Caco-2 (cell line): ENCODE measurements at regions of chr6 and their contacts with region 1.

Region 1: DNA sequence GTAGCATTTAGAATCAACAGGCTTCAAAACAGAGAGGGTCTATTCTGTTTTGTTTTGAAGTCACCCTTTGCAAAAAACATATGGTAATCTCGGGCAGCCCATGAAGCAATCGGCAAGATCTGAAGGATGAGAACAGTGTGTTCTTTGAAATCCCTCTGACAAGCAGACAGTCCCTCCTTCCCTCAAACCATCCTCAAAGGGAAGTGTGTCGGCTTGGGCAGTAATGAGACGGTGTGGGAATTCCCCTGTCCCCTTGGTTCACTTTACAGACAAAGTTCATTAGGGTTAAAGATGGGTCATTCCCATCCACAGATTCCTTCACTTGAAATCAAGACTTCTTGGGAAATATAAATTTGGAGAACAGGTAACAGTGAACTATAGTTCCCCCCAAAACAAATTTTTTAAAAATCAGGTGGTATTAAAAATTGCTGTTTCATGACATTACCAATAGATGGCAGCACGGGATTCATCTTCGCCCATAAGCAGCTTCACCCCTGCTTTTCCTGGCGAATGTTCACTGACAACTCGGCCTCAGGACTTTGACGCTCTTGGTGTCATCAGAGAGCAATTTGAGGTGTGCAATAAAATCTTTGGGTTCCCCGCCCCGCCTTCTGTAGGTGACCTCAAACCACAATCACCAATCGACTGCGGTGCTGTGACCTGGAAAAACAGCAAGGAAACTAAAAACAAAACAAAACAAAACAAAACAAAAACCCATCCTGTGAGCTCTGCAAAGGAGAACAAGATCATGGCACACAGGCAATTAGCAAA is 159.3 kb upstream of the TNFAIP3 start:
- DNase-seq: peak; percentile 73 to 88
- H3K4me3 ChIP-seq: no peak overlapping the region
- H3K4me3 Mint-ChIP-seq: peak overlapping the region; percentile 62
- H3K27ac Mint-ChIP-seq: peak overlapping the region; percentile 89
- H3K4me1 ChIP-seq: peaks cover 22% of the 10 kb centered on the region
- H3K4me1 Mint-ChIP-seq: peaks cover 36% of the 10 kb centered on the region
- H3K27me3 ChIP-seq: no peaks in the 10 kb centered on the region
- H3K27me3 Mint-ChIP-seq: no peaks in the 10 kb centered on the region
- CTCF ChIP-seq: peak; percentile 67 to 80

Region 2: GRCh38 chr6:137661601-137662000 is 46.2 kb before region 1 on chr6:
- CTCF ChIA-PET with region 1: no interaction called
- POLR2A ChIA-PET with region 1: no interaction called
- intact Hi-C with region 1: no loop called
- DNase-seq: peak; percentile 42 to 44
- H3K4me3 ChIP-seq: no peak overlapping the region
- H3K4me3 Mint-ChIP-seq: no peak overlapping the region
- H3K27ac Mint-ChIP-seq: no peak overlapping the region
- H3K4me1 ChIP-seq: peaks cover 52% of the 10 kb centered on the region
- H3K4me1 Mint-ChIP-seq: peaks cover 17% of the 10 kb centered on the region
- H3K27me3 ChIP-seq: no peaks in the 10 kb centered on the region
- H3K27me3 Mint-ChIP-seq: no peaks in the 10 kb centered on the region
- CTCF ChIP-seq: peak; percentile 15 to 27

Region 3: GRCh38 chr6:137722749-137723272 is 15.0 kb after region 1 on chr6:
- CTCF ChIA-PET with region 1: interaction called, 10 read pairs
- POLR2A ChIA-PET with region 1: no interaction called
- intact Hi-C with region 1: no loop called
- DNase-seq: no peak
- H3K4me3 ChIP-seq: no peak overlapping the region
- H3K4me3 Mint-ChIP-seq: peak overlapping the region; percentile 36
- H3K27ac Mint-ChIP-seq: peak overlapping the region; percentile 86
- H3K4me1 ChIP-seq: peaks cover 41% of the 10 kb centered on the region
- H3K4me1 Mint-ChIP-seq: peaks cover 32% of the 10 kb centered on the region
- H3K27me3 ChIP-seq: no peaks in the 10 kb centered on the region
- H3K27me3 Mint-ChIP-seq: no peaks in the 10 kb centered on the region
- CTCF ChIP-seq: no peak

Region 4: DNA sequence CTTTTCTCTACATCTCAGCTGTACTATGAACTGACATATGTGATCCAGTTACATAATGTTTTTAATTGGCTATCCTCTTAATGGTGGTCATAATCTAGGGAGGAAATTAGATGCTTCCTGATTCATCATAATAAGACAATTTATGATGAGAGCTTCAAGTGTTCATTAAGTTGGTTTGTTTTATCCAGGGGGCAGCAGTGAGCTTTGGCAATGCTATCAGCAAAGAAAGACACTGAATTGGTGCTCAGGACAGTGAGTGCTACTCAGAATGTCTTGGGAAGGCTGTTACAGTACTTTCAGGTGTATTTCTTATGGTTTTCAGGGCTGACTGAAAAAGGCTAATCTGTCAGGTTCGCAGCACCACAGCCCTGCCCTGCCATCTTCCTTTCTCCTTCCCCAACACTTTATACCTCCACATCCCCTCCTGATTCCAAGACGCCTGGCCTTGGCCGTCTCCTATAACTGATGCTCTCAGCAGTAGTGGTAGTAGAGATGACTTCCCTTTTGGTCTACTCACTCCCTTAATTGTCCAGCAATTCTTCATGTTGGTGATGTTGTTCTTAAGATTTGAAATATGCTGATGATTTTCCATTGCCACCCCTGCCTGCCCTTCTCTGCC is 92.3 kb after region 1 on chr6:
- CTCF ChIA-PET with region 1: interaction called, 7 read pairs
- POLR2A ChIA-PET with region 1: no interaction called
- intact Hi-C with region 1: loop called (anchors 1 kb)
- DNase-seq: peak; percentile 47 to 52
- H3K4me3 ChIP-seq: no peak overlapping the region
- H3K4me3 Mint-ChIP-seq: no peak overlapping the region
- H3K27ac Mint-ChIP-seq: peak overlapping the region; percentile 72
- H3K4me1 ChIP-seq: peaks cover 98% of the 10 kb centered on the region
- H3K4me1 Mint-ChIP-seq: peaks cover 43% of the 10 kb centered on the region
- H3K27me3 ChIP-seq: no peaks in the 10 kb centered on the region
- H3K27me3 Mint-ChIP-seq: no peaks in the 10 kb centered on the region
- CTCF ChIP-seq: peak; percentile 27 to 33

Region 5: GRCh38 chr6:137811121-137811915 is 103.5 kb after region 1 on chr6:
- CTCF ChIA-PET with region 1: no interaction called
- POLR2A ChIA-PET with region 1: no interaction called
- intact Hi-C with region 1: no loop called
- DNase-seq: peak; percentile 63 to 76
- H3K4me3 ChIP-seq: no peak overlapping the region
- H3K4me3 Mint-ChIP-seq: peak overlapping the region; percentile 67
- H3K27ac Mint-ChIP-seq: peak overlapping the region; percentile 74
- H3K4me1 ChIP-seq: peaks cover 41% of the 10 kb centered on the region
- H3K4me1 Mint-ChIP-seq: peaks cover 33% of the 10 kb centered on the region
- H3K27me3 ChIP-seq: no peaks in the 10 kb centered on the region
- H3K27me3 Mint-ChIP-seq: no peaks in the 10 kb centered on the region
- CTCF ChIP-seq: no peak

Region 6: DNA sequence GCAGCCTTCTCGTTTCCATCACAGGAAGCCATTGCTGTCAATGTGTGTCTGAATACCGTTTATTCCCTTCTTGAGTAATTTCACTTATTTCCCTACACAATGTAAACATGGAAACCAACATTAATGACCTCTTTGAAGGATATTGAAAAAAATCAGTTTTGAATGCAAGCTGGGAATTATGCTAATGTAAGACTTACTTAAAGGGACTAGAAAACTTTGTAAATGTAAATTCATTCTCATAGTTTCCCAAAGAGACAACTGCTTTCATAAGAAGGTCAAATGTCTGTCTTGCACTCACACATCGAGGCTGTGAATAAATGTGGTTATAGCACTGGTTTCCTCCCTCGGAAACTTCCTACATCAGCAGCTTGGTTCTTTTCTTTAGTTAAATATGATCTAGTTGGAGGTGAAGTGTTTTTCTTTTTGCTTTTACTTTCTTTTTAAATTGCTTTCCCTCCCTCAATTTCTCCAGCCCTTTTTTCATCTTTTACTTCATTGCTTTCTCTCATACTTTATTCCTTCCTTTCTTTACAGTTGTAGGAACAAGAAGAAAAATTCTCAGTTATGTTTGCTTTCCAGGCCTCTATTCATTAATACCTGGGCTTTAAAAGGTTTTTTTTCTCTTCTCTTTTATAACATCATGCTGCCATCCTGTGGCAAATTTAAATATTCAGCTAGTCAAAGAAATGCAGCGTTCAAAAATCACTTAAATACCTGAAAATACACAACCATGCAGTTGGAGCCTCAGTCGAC is 267.6 kb after region 1 on chr6:
- CTCF ChIA-PET with region 1: interaction called, 3 read pairs
- POLR2A ChIA-PET with region 1: no interaction called
- intact Hi-C with region 1: loop called (anchors 1 kb)
- DNase-seq: no peak
- H3K4me3 ChIP-seq: no peak overlapping the region
- H3K4me3 Mint-ChIP-seq: no peak overlapping the region
- H3K27ac Mint-ChIP-seq: peak overlapping the region; percentile 26
- H3K4me1 ChIP-seq: peaks cover 46% of the 10 kb centered on the region
- H3K4me1 Mint-ChIP-seq: peaks cover 34% of the 10 kb centered on the region
- H3K27me3 ChIP-seq: no peaks in the 10 kb centered on the region
- H3K27me3 Mint-ChIP-seq: no peaks in the 10 kb centered on the region
- CTCF ChIP-seq: peak in 1 of 2 experiments; percentile 25

Region 7: GRCh38 chr6:138109042-138109997 is 401.5 kb after region 1 on chr6:
- CTCF ChIA-PET with region 1: no interaction called
- POLR2A ChIA-PET with region 1: no interaction called
- intact Hi-C with region 1: loop called (anchors 5 kb)
- DNase-seq: peak; percentile 55 to 74
- H3K4me3 ChIP-seq: no peak overlapping the region
- H3K4me3 Mint-ChIP-seq: peak overlapping the region; percentile 55
- H3K27ac Mint-ChIP-seq: peak overlapping the region; percentile 33
- H3K4me1 ChIP-seq: peaks cover 8% of the 10 kb centered on the region
- H3K4me1 Mint-ChIP-seq: peaks cover 6% of the 10 kb centered on the region
- H3K27me3 ChIP-seq: no peaks in the 10 kb centered on the region
- H3K27me3 Mint-ChIP-seq: no peaks in the 10 kb centered on the region
- CTCF ChIP-seq: peak; percentile 72 to 84

Region 8: DNA sequence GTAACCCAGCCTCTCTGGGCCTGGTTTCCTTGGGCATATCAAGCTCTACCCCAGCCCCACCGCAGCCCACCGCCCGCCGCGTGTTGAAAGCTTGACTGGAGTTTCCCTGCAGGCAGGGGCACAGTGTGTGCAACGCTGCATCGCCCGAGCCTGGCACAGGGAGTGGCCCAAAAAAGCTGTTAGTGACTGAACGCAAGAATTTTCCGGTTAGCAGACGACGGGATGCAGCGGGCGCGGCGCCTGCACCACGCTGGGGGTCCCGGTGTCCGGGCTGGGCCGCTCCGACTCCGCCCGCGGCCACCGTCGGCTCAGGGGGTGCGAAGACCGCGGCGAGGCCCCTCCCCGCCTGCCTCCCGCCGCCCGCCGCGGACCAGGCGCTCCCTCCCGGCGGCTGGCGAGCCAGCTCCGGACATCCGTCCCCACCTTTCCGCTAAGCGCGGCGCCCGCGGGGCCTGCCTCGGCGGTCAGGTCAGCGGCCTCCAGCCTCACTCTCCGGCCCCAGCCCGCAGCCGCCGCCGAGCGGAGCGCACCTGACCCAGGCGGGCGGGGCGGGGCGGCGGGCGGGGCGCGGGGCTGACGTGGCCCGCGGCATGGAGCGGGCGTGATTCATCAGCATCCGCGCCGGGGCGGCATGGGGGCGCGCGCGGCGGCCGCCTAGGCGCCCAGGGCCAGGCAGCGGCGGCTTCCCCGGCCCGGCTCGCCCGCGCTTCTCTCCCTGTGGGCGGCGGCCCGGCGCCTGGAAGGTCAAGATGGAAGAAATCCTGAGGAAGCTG is 453.7 kb after region 1 on chr6 and contains the start of gene ARFGEF3:
- CTCF ChIA-PET with region 1: no interaction called
- POLR2A ChIA-PET with region 1: no interaction called
- intact Hi-C with region 1: no loop called
- DNase-seq: peak; percentile 61 to 80
- H3K4me3 ChIP-seq: peak within 1 kb of the TSS; percentile 68
- H3K4me3 Mint-ChIP-seq: peak within 1 kb of the TSS; percentile 71
- H3K27ac Mint-ChIP-seq: no peak within 1 kb of the TSS
- H3K4me1 ChIP-seq: 0 out of 2 replicates have a peak, but pooled peaks cover 5% of the 10 kb centered on the region
- H3K4me1 Mint-ChIP-seq: peaks cover 7% of the 10 kb centered on the region
- H3K27me3 ChIP-seq: 0 out of 2 replicates have a peak, but pooled peaks cover 1% of the 10 kb centered on the region
- H3K27me3 Mint-ChIP-seq: peaks cover 15% of the 10 kb centered on the region
- CTCF ChIP-seq: no peak
- total RNA-seq, gene ARFGEF3: 5.2 and 5.6 TPM in 2 replicates